Activated CD4-positive, alpha-beta T cell treated with anti-CD3 and anti-CD28 coated beads for 36 hours (primary cell): ENCODE measurements at regions of chr7 and their contacts with region 1.

Region 1: GRCh38 chr7:44999245-45000095 is 531 bp upstream of the CCM2 start:
- DNase-seq: peak; percentile 100
- ATAC-seq: peak; percentile 88
- H3K4me3 Mint-ChIP-seq: peak overlapping the region; percentile 91
- H3K27ac Mint-ChIP-seq: peak overlapping the region; percentile 91
- H3K4me1 Mint-ChIP-seq: peaks cover 56% of the 10 kb centered on the region
- H3K27me3 Mint-ChIP-seq: no peaks in the 10 kb centered on the region

Region 2: DNA sequence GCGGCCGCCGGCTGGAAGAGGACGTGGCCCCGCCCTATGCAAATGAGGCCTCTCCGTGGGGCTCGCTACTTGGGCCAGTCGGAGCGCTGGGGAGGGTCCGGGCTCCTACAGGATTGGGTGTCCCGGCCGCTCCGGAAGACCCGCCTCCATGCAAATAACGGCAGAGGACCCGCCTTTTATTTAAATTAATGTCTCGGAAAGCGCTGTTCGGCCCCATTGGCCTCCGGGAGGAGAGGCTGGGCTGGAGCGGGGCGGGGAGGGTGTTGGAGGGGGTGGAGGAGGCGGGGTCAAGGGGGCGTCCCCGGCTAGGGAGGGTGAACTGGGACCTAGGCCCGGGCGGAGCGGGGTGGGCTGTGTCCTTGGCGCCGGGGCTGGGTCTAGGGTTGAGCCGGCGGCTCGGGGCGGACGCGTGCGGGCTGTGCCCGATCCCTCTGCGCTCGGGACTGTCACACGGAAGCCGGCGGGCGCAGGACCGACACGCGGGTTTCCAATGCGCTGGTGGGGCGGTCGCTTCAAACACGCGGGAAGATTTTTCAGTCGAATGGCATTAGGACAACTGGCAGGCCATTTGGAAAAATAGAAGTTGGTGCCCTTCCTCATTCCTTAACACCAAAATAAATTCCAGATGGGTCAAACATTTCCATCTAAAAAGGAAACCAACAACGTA is 916.8 kb before region 1 on chr7:
- CTCF ChIA-PET with region 1: no interaction called
- POLR2A ChIA-PET with region 1: no interaction called
- intact Hi-C with region 1: loop called in 1 of 2 experiments (anchors 1 kb)
- DNase-seq: peak; percentile 99
- ATAC-seq: peak; percentile 95
- H3K4me3 Mint-ChIP-seq: peak overlapping the region; percentile 70
- H3K27ac Mint-ChIP-seq: peak overlapping the region; percentile 79
- H3K4me1 Mint-ChIP-seq: peaks cover 36% of the 10 kb centered on the region
- H3K27me3 Mint-ChIP-seq: no peaks in the 10 kb centered on the region

Region 3: GRCh38 chr7:44638611-44639557 is 360.6 kb before region 1 on chr7:
- CTCF ChIA-PET with region 1: interaction called, 3 read pairs
- POLR2A ChIA-PET with region 1: no interaction called
- intact Hi-C with region 1: loop called in 1 of 2 experiments (anchors 1 kb)
- DNase-seq: peak; percentile 90
- ATAC-seq: peak; percentile 71
- H3K4me3 Mint-ChIP-seq: peak overlapping the region; percentile 73
- H3K27ac Mint-ChIP-seq: peak overlapping the region; percentile 100
- H3K4me1 Mint-ChIP-seq: peaks cover 75% of the 10 kb centered on the region
- H3K27me3 Mint-ChIP-seq: no peaks in the 10 kb centered on the region

Region 4: GRCh38 chr7:44867073-44867995 is 132.1 kb before region 1 on chr7:
- CTCF ChIA-PET with region 1: no interaction called
- POLR2A ChIA-PET with region 1: no interaction called
- intact Hi-C with region 1: no loop called
- DNase-seq: peak; percentile 55
- ATAC-seq: peak; percentile 98
- H3K4me3 Mint-ChIP-seq: no peak overlapping the region
- H3K27ac Mint-ChIP-seq: peak overlapping the region; percentile 38
- H3K4me1 Mint-ChIP-seq: peaks cover 8% of the 10 kb centered on the region
- H3K27me3 Mint-ChIP-seq: no peaks in the 10 kb centered on the region

Region 5: GRCh38 chr7:44955733-44956132 is 43.7 kb before region 1 on chr7:
- CTCF ChIA-PET with region 1: no interaction called
- POLR2A ChIA-PET with region 1: no interaction called
- intact Hi-C with region 1: no loop called
- DNase-seq: no peak
- ATAC-seq: no peak
- H3K4me3 Mint-ChIP-seq: no peak overlapping the region
- H3K27ac Mint-ChIP-seq: no peak overlapping the region
- H3K4me1 Mint-ChIP-seq: peaks cover 20% of the 10 kb centered on the region
- H3K27me3 Mint-ChIP-seq: peaks cover 2% of the 10 kb centered on the region

Region 6: GRCh38 chr7:44973610-44974401 is 25.7 kb before region 1 on chr7:
- CTCF ChIA-PET with region 1: interaction called, 28 read pairs
- POLR2A ChIA-PET with region 1: interaction called, 99 read pairs
- intact Hi-C with region 1: no loop called
- DNase-seq: peak; percentile 74
- ATAC-seq: no peak
- H3K4me3 Mint-ChIP-seq: no peak overlapping the region
- H3K27ac Mint-ChIP-seq: peak overlapping the region; percentile 42
- H3K4me1 Mint-ChIP-seq: peaks cover 49% of the 10 kb centered on the region
- H3K27me3 Mint-ChIP-seq: no peaks in the 10 kb centered on the region

Region 7: DNA sequence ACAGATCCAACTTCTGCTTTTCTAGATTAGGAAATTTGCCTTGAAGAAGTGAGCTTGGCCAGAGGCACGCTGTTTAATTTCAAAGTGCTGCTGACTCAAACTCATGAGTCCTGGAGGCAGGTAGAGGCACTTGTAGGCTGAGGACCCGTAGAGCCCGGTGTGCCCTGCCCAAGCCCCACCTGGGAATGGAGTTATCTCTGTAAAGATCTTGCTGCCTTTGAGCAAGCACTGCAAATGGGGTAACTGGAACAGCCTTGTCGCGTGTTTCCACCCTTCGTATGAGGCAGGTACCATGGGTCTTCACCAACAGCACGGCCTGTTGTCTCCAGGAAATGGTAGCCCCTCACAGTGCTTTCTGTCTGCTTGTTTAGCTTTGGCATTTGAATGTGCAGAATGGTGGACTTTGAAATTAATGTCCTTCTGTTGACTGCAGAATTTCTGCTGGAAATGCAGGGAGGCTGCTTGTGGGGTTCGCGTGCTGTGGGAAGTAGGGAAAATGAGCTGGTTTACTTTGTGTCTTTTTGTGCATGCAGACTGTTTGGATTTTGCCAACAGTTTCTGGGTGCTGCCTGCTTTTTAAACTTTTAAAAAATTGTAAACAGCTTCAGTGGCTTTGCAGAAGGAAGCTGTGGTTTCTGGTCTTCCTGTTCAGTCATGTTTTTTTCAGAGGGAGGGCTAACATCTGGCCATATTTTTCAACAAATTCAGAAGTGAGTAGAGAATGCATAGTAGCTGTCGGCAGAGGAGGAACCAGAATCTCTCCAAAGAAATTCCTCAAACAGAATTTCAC is 27.7 kb after region 1 on chr7:
- CTCF ChIA-PET with region 1: interaction called, 8 read pairs
- POLR2A ChIA-PET with region 1: interaction called, 16 read pairs
- intact Hi-C with region 1: loop called (anchors 2 kb)
- DNase-seq: peak; percentile 37
- ATAC-seq: peak; percentile 26
- H3K4me3 Mint-ChIP-seq: peak overlapping the region; percentile 74
- H3K27ac Mint-ChIP-seq: peak overlapping the region; percentile 91
- H3K4me1 Mint-ChIP-seq: peaks cover 78% of the 10 kb centered on the region
- H3K27me3 Mint-ChIP-seq: no peaks in the 10 kb centered on the region

Region 8: GRCh38 chr7:45068236-45069023 is 69.0 kb after region 1 on chr7:
- CTCF ChIA-PET with region 1: no interaction called
- POLR2A ChIA-PET with region 1: no interaction called
- intact Hi-C with region 1: no loop called
- DNase-seq: no peak
- ATAC-seq: no peak
- H3K4me3 Mint-ChIP-seq: no peak overlapping the region
- H3K27ac Mint-ChIP-seq: no peak overlapping the region
- H3K4me1 Mint-ChIP-seq: peaks cover 9% of the 10 kb centered on the region
- H3K27me3 Mint-ChIP-seq: no peaks in the 10 kb centered on the region

Region 9: DNA sequence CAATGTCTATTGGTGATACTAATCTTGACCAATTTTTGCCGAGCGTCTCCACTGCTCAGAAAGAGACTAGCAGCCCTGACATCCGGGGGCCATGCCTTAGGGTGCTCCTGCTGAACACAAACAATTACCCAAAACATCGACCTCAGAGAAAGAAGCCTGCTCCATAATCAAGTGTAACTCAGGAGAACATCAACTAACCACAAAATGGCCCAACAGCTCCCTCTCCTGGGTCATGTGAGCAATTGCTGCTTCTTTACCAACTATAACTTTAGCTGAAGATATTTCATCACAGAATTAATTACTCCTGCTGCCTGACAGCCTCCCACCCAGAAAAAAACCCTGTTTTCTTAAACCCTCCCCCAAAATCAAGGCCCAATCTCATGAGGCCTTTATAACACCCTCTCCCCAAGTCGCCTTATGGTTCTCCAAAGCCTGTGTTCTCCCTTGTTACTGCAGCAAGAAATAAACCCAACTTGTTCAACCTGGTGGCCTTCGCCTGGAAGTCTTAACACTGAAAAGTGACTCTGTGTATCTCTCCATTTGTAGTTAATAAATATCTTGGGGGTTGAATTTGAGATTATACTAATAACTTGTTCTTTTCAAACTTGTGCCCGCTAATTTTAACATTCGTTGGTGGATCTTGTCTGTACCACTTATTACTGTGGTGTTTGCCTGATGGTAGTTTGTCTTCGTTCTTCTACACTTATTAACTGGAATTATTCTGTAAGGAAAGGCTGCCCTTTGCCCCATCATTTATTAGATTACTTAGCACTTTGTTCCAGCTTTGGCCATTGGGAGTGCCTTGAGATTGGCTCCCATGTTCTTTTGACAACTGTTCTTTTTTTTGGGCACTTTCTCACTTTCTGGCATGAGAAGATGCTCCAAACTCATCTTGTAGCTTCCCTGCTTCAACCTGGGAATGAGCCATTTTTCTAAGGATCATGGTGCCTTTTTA is 136.9 kb after region 1 on chr7:
- CTCF ChIA-PET with region 1: interaction called, 11 read pairs
- POLR2A ChIA-PET with region 1: interaction called, 6 read pairs
- intact Hi-C with region 1: no loop called
- DNase-seq: peak; percentile 82
- ATAC-seq: peak; percentile 91
- H3K4me3 Mint-ChIP-seq: no peak overlapping the region
- H3K27ac Mint-ChIP-seq: no peak overlapping the region
- H3K4me1 Mint-ChIP-seq: peaks cover 11% of the 10 kb centered on the region
- H3K27me3 Mint-ChIP-seq: no peaks in the 10 kb centered on the region